Cardiac septum (tissue), 1 donor: ENCODE measurements at regions of chr3 and their contacts with region 1.

Region 1: DNA sequence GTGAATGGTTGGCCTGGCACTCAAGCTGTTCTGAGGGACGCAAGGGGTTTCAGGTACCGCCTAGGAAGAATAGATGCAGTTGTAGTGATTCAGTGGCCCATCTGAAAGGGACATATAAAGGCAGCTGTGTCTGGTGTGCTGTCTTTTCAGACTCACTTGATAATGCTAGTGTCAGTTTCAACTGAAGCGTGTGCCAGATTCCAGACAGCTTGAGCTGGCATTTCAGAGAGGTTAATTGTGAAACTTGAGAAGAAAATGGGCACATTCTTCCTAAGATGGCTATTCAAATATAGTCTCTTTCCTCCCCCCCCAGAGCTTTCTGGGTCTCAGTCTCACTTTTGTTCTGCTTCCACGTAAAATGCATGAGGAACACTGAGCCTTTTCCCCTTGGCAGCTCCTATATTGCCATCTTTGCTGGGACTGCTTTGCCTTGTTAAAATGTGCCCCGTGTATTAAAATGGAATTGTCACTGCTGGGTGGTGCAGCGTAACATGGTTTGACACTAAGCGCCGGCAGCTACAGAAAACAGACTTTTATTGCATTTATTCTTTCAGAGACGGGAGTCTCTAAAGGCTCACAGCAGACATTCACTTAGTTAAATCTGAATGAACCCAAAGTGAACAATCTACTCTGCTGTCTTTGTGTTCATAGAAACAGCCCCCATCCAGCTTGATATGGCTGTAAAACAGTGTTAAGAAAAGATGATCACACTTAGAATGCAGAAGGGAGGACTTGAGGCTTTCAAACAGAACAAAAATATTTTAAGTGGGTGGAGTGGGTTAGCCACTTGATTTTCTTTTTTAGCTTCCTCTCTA is 478.7 kb downstream of the RBMS3 start:
- DNase-seq: no peak

Region 2: GRCh38 chr3:29525254-29525881 is 234.2 kb before region 1 on chr3:
- intact Hi-C with region 1: loop called (anchors 5 kb)
- DNase-seq: no peak

Region 3: GRCh38 chr3:29694783-29695182 is 64.8 kb before region 1 on chr3:
- intact Hi-C with region 1: loop called (anchors 5 kb)
- DNase-seq: no peak